Activated B cell treated with CpG ODN at 0.5 μM for 24 hours (primary cell): ENCODE measurements at regions of chr4 and their contacts with region 1.

Region 1: DNA sequence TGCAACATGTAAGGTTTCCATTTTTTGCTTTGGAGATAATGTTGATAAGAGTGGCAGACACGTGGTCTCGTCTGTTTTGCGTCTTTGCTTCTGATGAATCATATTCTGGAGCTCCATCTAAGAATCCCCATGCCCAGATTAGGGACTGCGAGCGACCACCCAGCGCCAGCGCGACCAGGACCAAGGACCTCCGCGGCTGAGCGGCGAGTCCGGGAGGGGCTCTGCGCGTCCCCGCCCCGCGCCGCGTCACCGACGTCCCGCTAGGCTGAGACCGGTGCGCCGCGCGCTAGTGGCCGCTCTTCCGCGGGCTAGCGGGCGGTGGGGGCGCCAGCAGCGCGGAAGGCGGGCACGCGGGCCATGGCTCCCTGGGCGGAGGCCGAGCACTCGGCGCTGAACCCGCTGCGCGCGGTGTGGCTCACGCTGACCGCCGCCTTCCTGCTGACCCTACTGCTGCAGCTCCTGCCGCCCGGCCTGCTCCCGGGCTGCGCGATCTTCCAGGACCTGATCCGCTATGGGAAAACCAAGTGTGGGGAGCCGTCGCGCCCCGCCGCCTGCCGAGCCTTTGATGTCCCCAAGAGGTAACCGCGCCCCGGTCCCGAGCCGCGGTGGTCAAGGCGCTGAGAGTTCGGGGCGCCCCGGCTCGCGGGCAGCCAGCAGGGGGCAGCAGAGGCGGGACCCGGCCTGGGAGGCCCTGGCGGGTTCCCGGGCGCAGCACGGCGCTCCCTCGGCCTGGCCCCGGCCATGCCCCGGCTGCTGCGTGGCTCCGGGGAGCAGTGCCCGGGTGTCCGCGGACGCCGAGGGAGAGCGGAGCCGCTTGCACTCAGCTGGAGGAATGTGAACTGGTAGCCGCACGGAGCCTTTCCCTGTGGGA is at the start of gene SRD5A3:
- DNase-seq: peak; percentile 87
- ATAC-seq: peak; percentile 89
- H3K4me3 Mint-ChIP-seq: peak within 1 kb of the TSS; percentile 93
- H3K27ac Mint-ChIP-seq: peak within 1 kb of the TSS; percentile 94
- H3K4me1 Mint-ChIP-seq: peaks cover 13% of the 10 kb centered on the region
- H3K27me3 Mint-ChIP-seq: peaks cover under 1% of the 10 kb centered on the region
- CTCF ChIP-seq: no peak
- total RNA-seq, gene SRD5A3: 4.5 and 5.7 TPM in 2 replicates

Region 2: GRCh38 chr4:55409468-55410171 is 63.4 kb after region 1 on chr4:
- CTCF ChIA-PET with region 1: interaction called, 10 read pairs
- POLR2A ChIA-PET with region 1: no interaction called
- intact Hi-C with region 1: no loop called
- DNase-seq: no peak
- ATAC-seq: peak; percentile 90
- H3K4me3 Mint-ChIP-seq: peak overlapping the region; percentile 32
- H3K27ac Mint-ChIP-seq: peak overlapping the region; percentile 76
- H3K4me1 Mint-ChIP-seq: peaks cover 25% of the 10 kb centered on the region
- H3K27me3 Mint-ChIP-seq: no peaks in the 10 kb centered on the region
- CTCF ChIP-seq: no peak

Region 3: DNA sequence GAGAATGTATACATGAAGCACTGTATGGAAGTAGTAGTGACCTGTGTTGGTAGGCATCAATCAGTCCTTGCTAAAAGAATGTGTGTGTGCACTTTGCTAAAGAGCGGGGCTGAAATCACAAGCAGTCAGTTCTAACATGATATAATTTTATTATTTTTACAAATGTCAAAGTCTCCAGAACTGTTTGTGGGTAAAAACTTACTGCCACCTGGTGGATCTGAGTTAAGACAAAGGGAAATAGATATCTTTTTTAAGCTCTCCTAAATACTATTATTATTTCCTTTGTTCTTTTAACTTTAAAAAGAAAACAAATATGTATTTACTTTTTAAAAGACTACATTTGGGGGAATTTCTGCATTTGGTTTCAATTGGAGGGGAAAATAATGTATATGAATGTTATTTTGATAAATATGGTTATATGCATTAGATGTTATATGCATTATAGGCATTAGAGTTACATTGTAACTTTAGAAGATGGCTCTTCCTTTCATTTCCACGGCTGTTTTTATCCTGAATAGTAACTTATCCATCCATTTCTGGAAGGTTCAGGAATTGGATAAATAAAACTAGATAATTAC is 208.3 kb after region 1 on chr4:
- CTCF ChIA-PET with region 1: interaction called, 5 read pairs
- POLR2A ChIA-PET with region 1: no interaction called
- intact Hi-C with region 1: loop called (anchors 1 kb)
- DNase-seq: no peak
- ATAC-seq: no peak
- H3K4me3 Mint-ChIP-seq: no peak overlapping the region
- H3K27ac Mint-ChIP-seq: no peak overlapping the region
- H3K4me1 Mint-ChIP-seq: peaks cover 3% of the 10 kb centered on the region
- H3K27me3 Mint-ChIP-seq: peaks cover 11% of the 10 kb centered on the region
- CTCF ChIP-seq: no peak

Region 4: GRCh38 chr4:55736605-55737183 is 390.5 kb after region 1 on chr4:
- CTCF ChIA-PET with region 1: no interaction called
- POLR2A ChIA-PET with region 1: no interaction called
- intact Hi-C with region 1: loop called (anchors 1 kb)
- DNase-seq: no peak
- ATAC-seq: no peak
- H3K4me3 Mint-ChIP-seq: no peak overlapping the region
- H3K27ac Mint-ChIP-seq: no peak overlapping the region
- H3K4me1 Mint-ChIP-seq: no peaks in the 10 kb centered on the region
- H3K27me3 Mint-ChIP-seq: peaks cover 32% of the 10 kb centered on the region
- CTCF ChIP-seq: no peak

Region 5: DNA sequence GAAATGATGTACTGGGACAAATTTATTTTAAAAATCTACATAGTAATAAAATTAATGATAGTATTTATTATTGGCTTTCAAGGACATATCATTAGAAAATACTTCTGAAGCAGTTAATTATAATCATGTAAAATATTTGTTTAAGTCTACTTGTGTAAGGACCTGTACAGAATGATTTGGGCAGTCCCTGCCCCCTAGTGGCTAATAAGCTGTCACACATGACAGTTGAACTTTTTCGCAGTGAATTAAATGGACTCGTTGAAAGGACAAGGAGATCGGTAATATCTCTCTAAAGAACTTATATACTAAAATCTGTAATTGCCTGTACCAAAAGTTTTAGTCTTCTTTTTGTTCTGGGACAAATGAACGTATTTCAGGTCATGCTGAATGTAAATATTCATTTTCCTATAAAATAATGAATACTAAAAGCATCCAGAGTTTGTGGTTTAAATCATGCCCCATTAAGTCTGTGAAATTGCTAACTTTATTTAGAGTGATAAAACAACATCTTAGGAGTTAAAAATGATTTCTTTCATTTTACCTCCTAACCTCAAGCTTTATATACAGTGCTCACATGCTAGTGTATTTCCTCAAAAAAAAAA is 520.9 kb after region 1 on chr4:
- CTCF ChIA-PET with region 1: interaction called, 6 read pairs
- POLR2A ChIA-PET with region 1: no interaction called
- intact Hi-C with region 1: loop called (anchors 1 kb)
- DNase-seq: no peak
- ATAC-seq: peak; percentile 84
- H3K4me3 Mint-ChIP-seq: no peak overlapping the region
- H3K27ac Mint-ChIP-seq: no peak overlapping the region
- H3K4me1 Mint-ChIP-seq: peaks cover 22% of the 10 kb centered on the region
- H3K27me3 Mint-ChIP-seq: no peaks in the 10 kb centered on the region
- CTCF ChIP-seq: no peak

Region 6: GRCh38 chr4:56387023-56388001 is 1041.1 kb after region 1 on chr4 and contains the start of gene AASDH:
- CTCF ChIA-PET with region 1: no interaction called
- POLR2A ChIA-PET with region 1: no interaction called
- intact Hi-C with region 1: loop called (anchors 2 kb)
- DNase-seq: peak; percentile 96
- ATAC-seq: peak; percentile 90
- H3K4me3 Mint-ChIP-seq: peak within 1 kb of the TSS; percentile 93
- H3K27ac Mint-ChIP-seq: peak within 1 kb of the TSS; percentile 99
- H3K4me1 Mint-ChIP-seq: peaks cover 27% of the 10 kb centered on the region
- H3K27me3 Mint-ChIP-seq: no peaks in the 10 kb centered on the region
- CTCF ChIP-seq: no peak
- total RNA-seq, gene AASDH: 12.8 and 14.2 TPM in 2 replicates